ENCODE measurements at regions of chr20 and their contacts with region 1.

Region 1: DNA sequence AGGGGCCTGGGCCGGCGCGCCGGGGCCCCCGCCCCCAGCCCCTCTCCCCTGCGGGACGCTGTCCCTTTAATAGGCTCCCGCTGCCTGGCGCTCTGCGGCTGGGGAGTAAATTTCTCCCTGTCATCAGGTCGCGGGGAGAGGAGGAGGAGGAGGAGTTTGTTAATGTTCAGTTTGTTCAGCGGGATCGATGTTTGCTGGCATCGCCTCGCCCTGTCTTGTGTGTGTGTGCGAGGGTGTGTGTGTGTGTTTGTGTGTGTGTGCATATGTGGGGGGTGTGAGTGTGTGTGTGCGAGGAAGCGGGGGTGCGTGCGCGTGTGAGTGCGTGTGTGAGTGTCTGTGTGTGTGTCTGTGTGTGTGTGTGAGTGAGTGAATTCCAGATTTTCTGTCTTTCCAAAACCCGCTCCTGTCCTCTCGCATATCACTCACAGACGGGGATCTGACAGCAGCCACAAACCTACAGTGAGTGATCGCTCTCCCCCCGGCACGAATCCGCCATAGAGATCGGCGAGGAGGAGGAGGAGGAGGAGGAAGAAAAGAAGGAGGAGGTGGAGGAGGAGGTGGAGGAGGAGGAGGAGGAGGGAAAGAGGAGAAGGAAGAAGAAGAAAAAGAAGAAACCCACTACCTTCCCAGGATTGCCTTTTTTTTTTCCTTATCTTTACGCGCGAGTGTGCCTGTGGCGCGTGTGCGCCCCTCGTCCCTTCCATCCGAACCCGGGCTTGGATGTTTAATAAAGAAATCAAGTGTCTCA is at the start of gene TSHZ2:
- DNase-seq: peak; percentile 82
- H3K4me3 ChIP-seq: peak within 1 kb of the TSS; percentile 39 to 60
- H3K27ac ChIP-seq: peak within 1 kb of the TSS in 1 of 2 experiments; percentile 78; a peak in 2 of 4 replicates
- H3K4me1 ChIP-seq: peaks cover 0 to 12% of the 10 kb centered on the region in 2 experiments; a peak in 3 of 4 replicates
- H3K27me3 ChIP-seq: peaks cover 11% of the 10 kb centered on the region; the same call in 1 of the 2 replicates
- CTCF ChIP-seq: no peak
- EP300 ChIP-seq: no peak
- RAD21 ChIP-seq: peak; percentile 0
- polyA plus RNA-seq, gene TSHZ2: 0.11 and 0.13 TPM in 2 replicates

Region 2: GRCh38 chr20:52948491-52948890 is 23.9 kb before region 1 on chr20:
- CTCF ChIA-PET with region 1: no interaction called
- POLR2A ChIA-PET with region 1: no interaction called
- DNase-seq: no peak
- H3K4me3 ChIP-seq: no peak overlapping the region
- H3K27ac ChIP-seq: no peak overlapping the region
- H3K4me1 ChIP-seq: no peaks in the 10 kb centered on the region
- H3K27me3 ChIP-seq: no peaks in the 10 kb centered on the region
- CTCF ChIP-seq: no peak
- EP300 ChIP-seq: no peak
- RAD21 ChIP-seq: no peak

Region 3: GRCh38 chr20:52959125-52959524 is 13.2 kb before region 1 on chr20:
- CTCF ChIA-PET with region 1: interaction called, 13 read pairs
- POLR2A ChIA-PET with region 1: interaction called, 4 read pairs
- DNase-seq: peak; percentile 78
- H3K4me3 ChIP-seq: no peak overlapping the region
- H3K27ac ChIP-seq: peak overlapping the region; percentile 47 to 97
- H3K4me1 ChIP-seq: peaks cover 10 to 12% of the 10 kb centered on the region in 2 experiments; a peak in 3 of 4 replicates
- H3K27me3 ChIP-seq: no peaks in the 10 kb centered on the region
- CTCF ChIP-seq: no peak
- EP300 ChIP-seq: peak in 1 of 2 experiments; percentile 92; a peak in 2 of 4 replicates
- RAD21 ChIP-seq: peak; percentile 41

Region 4: DNA sequence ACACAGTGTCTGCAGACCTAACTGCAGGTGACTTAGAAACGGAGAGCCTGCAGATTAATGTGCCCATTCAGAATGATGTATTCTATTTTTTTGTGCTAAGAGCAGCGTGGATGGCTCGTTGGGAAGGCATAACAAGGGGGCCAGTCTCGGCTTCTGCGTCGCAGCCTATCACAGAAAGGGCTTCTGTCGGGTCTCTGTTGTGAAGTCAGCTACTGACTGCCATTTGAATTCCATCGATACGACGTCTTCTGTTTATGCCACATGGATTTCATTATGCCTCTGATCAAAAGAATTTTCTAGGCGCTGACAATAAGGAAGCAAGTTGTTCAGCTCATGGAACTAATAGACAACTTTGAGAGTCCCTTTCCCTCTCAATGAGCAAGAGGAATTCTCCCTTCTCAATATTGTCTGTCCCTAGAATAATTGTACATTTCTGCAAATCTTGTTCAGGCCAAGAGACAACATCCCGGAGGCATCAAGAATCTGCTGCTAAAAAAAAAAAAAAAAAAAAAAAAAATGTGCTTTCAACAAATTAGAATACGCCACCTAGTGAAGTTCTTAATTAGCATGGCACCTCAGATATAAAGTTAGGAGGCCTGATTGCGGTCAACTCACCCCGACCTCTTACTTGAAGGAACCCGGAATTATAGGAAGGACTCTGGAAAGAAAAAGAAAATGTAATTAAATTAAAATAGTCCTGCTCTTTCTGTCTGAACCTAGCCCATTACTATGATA is 223.7 kb after region 1 on chr20:
- CTCF ChIA-PET with region 1: no interaction called
- POLR2A ChIA-PET with region 1: no interaction called
- DNase-seq: no peak
- H3K4me3 ChIP-seq: no peak overlapping the region
- H3K27ac ChIP-seq: no peak overlapping the region
- H3K4me1 ChIP-seq: no peaks in the 10 kb centered on the region; a peak in 1 of 4 replicates
- H3K27me3 ChIP-seq: no peaks in the 10 kb centered on the region; the same call in 1 of the 2 replicates
- CTCF ChIP-seq: no peak
- EP300 ChIP-seq: no peak
- RAD21 ChIP-seq: no peak

Region 5: DNA sequence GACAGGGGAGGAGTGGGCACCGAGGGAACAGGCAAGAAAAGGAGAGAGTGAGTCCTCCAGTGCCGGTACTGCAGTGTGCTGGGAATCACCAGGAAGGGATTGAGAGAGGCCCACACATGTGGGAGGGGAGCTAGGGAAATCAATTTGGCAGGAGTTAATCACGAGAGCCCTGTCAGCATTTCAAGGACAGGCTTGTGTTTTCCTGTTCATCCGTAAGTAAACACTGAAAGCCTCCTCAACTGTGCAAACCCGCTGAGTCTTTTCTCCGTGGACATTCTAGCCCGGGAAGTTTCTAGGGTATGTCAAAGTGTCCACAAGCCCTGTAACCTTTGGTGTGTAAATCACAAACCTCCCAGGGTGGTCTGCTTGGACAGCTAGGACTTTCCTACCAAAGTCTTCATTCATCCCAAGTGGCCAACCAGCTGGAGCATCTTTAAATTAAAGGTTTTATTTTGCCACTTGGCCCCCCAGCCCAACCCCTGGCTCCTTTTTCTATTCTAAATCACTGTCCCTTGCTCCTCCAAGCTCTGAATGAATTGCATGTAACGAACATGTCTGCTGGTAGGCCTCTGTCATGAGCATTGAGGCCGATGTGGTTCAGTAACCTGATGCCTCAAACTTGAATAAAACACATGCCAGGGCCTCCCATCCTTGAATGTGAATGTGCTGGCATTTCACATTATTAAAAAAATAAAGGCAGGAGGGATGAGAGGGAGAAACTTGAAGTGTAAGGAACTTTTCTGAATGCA is 472.2 kb after region 1 on chr20:
- CTCF ChIA-PET with region 1: no interaction called
- POLR2A ChIA-PET with region 1: no interaction called
- DNase-seq: no peak
- H3K4me3 ChIP-seq: no peak overlapping the region
- H3K27ac ChIP-seq: no peak overlapping the region
- H3K4me1 ChIP-seq: no peaks in the 10 kb centered on the region
- H3K27me3 ChIP-seq: no peaks in the 10 kb centered on the region
- CTCF ChIP-seq: no peak
- EP300 ChIP-seq: no peak
- RAD21 ChIP-seq: no peak